Naive thymus-derived CD4-positive, alpha-beta T cell (primary cell): ENCODE measurements at regions of chr6 and their contacts with region 1.

Region 1: DNA sequence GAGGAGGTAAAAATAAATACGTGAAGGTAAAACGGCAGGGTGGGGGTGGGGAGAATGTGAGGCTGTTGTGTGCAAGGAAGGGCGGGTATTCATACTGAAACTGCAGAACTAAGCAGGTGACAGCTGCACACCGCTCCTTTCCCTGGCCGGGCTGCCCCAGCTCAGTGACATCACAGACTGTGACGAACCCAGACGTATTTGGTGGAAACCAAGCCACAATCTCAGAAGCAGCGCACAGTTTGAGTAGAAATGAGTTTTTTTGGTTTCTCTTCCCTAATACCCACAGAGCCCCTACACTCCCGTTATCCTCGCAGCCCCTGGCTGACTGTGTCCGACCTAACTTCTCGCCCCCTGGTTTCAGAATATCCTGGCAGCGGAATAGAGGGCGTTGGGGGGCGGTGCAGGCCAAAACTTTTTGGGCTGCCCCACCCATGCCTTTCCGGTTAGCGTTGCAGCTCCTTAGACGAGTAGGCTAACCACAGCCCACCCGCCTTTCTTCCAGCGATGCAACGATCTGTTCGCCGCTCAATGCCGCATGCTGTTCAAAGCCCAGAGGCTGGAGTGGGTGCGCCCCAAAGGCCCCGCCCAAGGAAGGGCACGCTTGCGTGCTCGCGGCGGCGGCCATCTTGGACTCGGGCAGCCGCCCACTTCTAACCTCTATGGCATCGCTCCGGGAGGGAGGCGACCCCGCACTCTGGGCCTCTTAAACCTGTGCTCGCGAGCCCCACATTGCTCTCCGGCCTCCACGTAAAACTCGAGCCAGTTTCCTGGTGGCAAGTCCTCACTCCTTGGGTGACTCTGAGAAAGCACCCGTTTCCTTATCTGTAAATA is 9.1 kb downstream of the BAK1 start:
- DNase-seq: peak; percentile 81 to 98 (median 95)
- ATAC-seq: peak; percentile 91
- H3K4me3 ChIP-seq: peak overlapping the region; percentile 85
- H3K4me3 Mint-ChIP-seq: peak overlapping the region; percentile 80 to 99 (median 94)
- H3K27ac ChIP-seq: peak overlapping the region; percentile 98
- H3K27ac Mint-ChIP-seq: peak overlapping the region; percentile 99 to 100 (median 100)
- H3K4me1 ChIP-seq: peaks cover 19 to 21% of the 10 kb centered on the region in 2 donors
- H3K4me1 Mint-ChIP-seq: peaks cover 8 to 57% (median 31%) of the 10 kb centered on the region in 7 donors
- H3K27me3 ChIP-seq: no peaks in the 10 kb centered on the region
- H3K27me3 Mint-ChIP-seq: peaks cover 0 to 3% (median 0%) of the 10 kb centered on the region in 5 donors

Region 2: GRCh38 chr6:32854376-32855178 is 716.4 kb before region 1 on chr6:
- CTCF ChIA-PET with region 1: no interaction called
- POLR2A ChIA-PET with region 1: no interaction called
- intact Hi-C with region 1: no loop called
- DNase-seq: peak in 5 of 9 donors; percentile 42 to 75 (median 52)
- ATAC-seq: peak; percentile 24
- H3K4me3 ChIP-seq: peak overlapping the region; percentile 91
- H3K4me3 Mint-ChIP-seq: peak overlapping the region; percentile 96 to 100 (median 100)
- H3K27ac ChIP-seq: peak overlapping the region; percentile 100
- H3K27ac Mint-ChIP-seq: peak overlapping the region; percentile 97 to 100 (median 100)
- H3K4me1 ChIP-seq: peaks cover 40 to 51% of the 10 kb centered on the region in 2 donors
- H3K4me1 Mint-ChIP-seq: peaks cover 57 to 82% (median 70%) of the 10 kb centered on the region in 7 donors
- H3K27me3 ChIP-seq: no peaks in the 10 kb centered on the region
- H3K27me3 Mint-ChIP-seq: no peaks in the 10 kb centered on the region

Region 3: DNA sequence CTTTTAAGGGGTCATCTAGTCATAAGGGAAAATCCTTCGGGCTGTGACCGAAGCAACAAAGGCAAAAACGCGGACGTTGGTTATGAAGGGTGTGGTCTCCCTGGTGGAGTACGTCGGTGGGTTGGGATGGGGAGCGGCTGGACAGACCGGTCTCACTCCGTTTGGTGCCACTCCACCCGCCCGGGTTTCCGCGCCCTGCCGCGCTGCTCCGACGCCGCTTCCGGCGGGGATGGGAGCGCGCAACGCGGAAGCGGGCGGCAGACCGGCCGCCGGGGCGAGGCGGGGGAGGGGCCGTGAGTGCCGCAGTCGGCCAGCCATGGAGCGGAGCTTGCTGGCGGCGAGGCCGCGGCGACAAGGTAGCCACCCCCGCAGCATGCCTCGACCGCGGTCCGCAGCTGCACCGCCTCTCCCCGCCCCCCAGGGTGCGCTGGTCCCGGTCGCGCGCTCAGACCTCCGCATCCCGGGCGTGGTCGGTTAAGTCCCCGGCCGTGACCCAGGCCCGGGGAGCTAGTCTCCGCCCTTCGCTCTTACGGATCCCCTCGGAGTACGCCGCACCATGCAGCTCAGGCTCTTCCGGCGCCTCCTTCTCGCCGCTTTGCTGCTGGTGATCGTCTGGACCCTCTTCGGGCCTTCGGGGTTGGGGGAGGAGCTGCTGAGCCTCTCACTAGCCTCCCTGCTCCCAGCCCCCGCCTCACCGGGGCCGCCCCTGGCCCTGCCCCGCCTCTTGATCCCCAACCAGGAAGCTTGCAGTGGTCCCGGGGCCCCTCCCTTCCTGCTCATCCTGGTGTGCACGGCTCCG is 294.0 kb before region 1 on chr6 and contains the start of gene B3GALT4:
- CTCF ChIA-PET with region 1: no interaction called
- POLR2A ChIA-PET with region 1: no interaction called
- intact Hi-C with region 1: loop called (anchors 2 to 5 kb)
- DNase-seq: peak; percentile 55 to 88 (median 63)
- ATAC-seq: peak; percentile 81
- H3K4me3 ChIP-seq: peak within 1 kb of the TSS; percentile 67
- H3K4me3 Mint-ChIP-seq: peak within 1 kb of the TSS; percentile 84 to 99 (median 92)
- H3K27ac ChIP-seq: peak within 1 kb of the TSS; percentile 87
- H3K27ac Mint-ChIP-seq: peak within 1 kb of the TSS; percentile 88 to 98 (median 93)
- H3K4me1 ChIP-seq: peaks cover 47 to 50% of the 10 kb centered on the region in 2 donors
- H3K4me1 Mint-ChIP-seq: peaks cover 38 to 83% (median 65%) of the 10 kb centered on the region in 7 donors
- H3K27me3 ChIP-seq: no peaks in the 10 kb centered on the region
- H3K27me3 Mint-ChIP-seq: no peaks in the 10 kb centered on the region
- total RNA-seq, gene B3GALT4: 12.9 to 48.0 (median 18.2) TPM

Region 4: DNA sequence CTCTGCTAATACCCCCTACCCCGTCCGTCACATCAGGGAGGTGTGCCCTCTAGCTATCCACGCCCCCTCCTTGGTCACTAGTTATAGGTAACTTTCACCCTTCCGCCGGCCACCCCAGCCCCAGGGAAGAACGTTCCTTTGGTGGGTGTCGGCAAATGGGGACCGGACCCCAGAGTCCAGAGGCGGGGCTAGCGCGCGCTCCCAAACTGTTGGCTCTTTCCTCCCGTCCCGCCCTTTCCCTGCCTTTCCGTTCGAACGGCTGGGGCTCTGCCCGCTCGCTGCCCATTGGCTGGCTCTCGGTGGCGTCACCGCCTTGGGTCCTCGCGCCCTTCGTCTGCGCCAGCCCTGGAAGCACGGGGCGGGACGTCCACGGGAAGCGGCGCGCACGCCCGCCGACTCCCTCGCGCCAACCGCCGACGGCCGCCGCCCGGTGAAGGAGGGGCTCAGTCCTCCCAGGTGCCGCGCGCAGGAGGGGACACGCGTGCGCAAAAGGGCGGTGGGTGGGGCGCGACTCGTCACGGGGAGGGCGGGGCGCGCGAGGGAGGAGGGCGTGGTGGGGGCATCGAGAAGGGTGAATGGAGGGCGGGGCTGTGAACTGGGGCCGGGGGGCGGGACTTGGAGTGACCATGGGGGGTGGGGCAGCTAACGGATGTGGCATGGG is 160.8 kb before region 1 on chr6:
- CTCF ChIA-PET with region 1: no interaction called
- POLR2A ChIA-PET with region 1: interaction called, 4 read pairs
- intact Hi-C with region 1: loop called (anchors 1 kb)
- DNase-seq: peak; percentile 94 to 98 (median 95)
- ATAC-seq: peak; percentile 82
- H3K4me3 ChIP-seq: peak overlapping the region; percentile 78
- H3K4me3 Mint-ChIP-seq: peak overlapping the region; percentile 85 to 95 (median 90)
- H3K27ac ChIP-seq: peak overlapping the region; percentile 100
- H3K27ac Mint-ChIP-seq: peak overlapping the region; percentile 65 to 99 (median 97)
- H3K4me1 ChIP-seq: peaks cover 35 to 36% of the 10 kb centered on the region in 2 donors
- H3K4me1 Mint-ChIP-seq: peaks cover 25 to 60% (median 46%) of the 10 kb centered on the region in 7 donors
- H3K27me3 ChIP-seq: no peaks in the 10 kb centered on the region
- H3K27me3 Mint-ChIP-seq: no peaks in the 10 kb centered on the region

Region 5: DNA sequence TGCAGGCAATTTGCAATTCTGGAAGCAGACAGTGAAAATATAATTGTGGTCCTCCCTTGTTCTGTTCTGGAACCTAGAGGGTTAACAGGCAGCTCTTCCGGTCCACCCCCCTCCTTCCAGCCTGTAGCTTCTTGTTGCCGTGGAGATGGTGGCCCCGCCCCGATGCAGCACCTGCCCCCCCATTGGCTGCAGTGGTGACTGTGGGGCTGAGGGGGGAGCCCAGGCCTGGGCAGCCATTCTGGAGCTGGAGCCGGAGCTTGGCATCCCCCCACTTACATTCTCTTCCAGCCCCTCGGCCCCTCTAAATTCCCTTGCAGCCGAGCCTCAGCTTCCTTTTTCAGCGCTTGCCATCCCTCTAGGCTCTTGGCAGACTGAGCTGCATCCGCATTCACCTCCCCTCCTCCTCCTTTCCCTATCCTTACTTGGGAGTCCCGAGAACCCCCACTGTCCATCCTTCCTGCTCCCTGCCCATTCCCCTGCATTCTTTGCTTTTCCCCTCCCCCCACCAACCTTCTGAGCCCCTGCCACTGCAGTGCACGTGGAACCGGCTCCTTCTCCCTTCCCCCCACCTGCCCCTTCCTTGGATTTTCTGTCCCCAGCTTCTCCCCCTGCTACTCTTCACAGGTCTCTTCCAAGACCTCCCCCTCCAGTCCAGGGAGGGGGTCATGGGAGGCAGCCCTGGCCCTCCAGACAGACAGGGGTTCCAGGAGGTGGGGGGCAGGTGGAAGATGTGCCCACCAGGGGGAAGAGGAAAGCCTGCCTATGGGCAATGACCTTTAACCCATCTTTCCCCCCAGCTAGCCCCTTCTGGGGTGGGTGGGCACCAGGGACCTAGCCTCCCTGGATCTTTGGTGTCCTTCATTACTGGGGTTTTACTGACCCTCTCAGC is 139.8 kb before region 1 on chr6:
- CTCF ChIA-PET with region 1: no interaction called
- POLR2A ChIA-PET with region 1: interaction called, 13 read pairs
- intact Hi-C with region 1: loop called (anchors 1 kb)
- DNase-seq: peak; percentile 65 to 89 (median 87)
- ATAC-seq: peak; percentile 82
- H3K4me3 ChIP-seq: peak overlapping the region; percentile 52
- H3K4me3 Mint-ChIP-seq: peak overlapping the region; percentile 86 to 98 (median 92)
- H3K27ac ChIP-seq: peak overlapping the region; percentile 88
- H3K27ac Mint-ChIP-seq: peak overlapping the region; percentile 81 to 98 (median 96)
- H3K4me1 ChIP-seq: peaks cover 42 to 51% of the 10 kb centered on the region in 2 donors
- H3K4me1 Mint-ChIP-seq: peaks cover 56 to 69% (median 64%) of the 10 kb centered on the region in 7 donors
- H3K27me3 ChIP-seq: no peaks in the 10 kb centered on the region
- H3K27me3 Mint-ChIP-seq: no peaks in the 10 kb centered on the region

Region 6: DNA sequence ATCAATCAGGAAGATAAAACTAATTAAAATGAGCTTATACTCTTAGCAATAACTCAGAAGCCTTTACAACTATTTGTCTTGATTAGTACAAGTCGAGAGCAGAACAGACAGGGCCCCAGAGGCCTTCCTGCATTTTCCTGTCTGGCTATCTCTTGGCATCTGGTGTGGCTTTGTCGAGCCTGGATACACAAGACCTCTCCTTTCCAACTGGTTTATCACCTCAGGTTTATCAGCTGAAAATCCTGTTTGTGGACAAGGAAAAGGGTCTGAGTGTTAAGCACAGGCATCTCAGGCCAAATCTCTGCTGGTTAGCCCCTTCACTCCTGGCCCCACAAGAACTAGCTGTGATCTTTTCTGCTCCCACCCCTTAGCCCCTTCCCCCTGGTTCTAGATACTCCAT is 23.5 kb before region 1 on chr6:
- CTCF ChIA-PET with region 1: no interaction called
- POLR2A ChIA-PET with region 1: interaction called, 12 read pairs
- intact Hi-C with region 1: loop called in 1 of 2 experiments (anchors 1 kb)
- DNase-seq: no peak
- ATAC-seq: no peak
- H3K4me3 ChIP-seq: no peak overlapping the region
- H3K4me3 Mint-ChIP-seq: peak overlapping the region in 6 of 10 donors; percentile 6 to 76 (median 46)
- H3K27ac ChIP-seq: no peak overlapping the region
- H3K27ac Mint-ChIP-seq: peak overlapping the region in 8 of 9 donors; percentile 61 to 89 (median 79)
- H3K4me1 ChIP-seq: peaks cover 10 to 14% of the 10 kb centered on the region in 2 donors
- H3K4me1 Mint-ChIP-seq: peaks cover 12 to 26% (median 22%) of the 10 kb centered on the region in 7 donors
- H3K27me3 ChIP-seq: no peaks in the 10 kb centered on the region
- H3K27me3 Mint-ChIP-seq: no peaks in the 10 kb centered on the region

Region 7: DNA sequence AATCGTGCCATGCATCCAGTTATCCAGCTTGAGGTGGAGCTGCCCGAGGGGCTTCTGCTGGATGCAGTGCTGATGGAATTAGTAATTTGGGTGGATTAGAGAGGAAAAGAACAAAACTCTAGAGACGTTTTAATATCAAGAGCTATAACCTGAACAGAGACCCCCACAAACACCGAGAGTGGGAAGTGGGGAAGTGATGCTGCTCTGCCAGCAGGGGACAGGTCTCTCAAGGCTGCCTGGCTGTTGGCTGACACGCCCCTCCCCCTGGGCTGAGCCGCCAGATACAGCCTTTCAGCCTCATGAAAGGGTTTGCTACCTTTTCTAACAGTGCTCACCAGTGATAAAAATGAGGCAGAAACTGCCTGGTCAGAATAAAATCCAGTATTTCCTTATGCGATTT is 208.3 kb after region 1 on chr6:
- CTCF ChIA-PET with region 1: no interaction called
- POLR2A ChIA-PET with region 1: no interaction called
- intact Hi-C with region 1: no loop called
- DNase-seq: no peak
- ATAC-seq: no peak
- H3K4me3 ChIP-seq: no peak overlapping the region
- H3K4me3 Mint-ChIP-seq: no peak overlapping the region
- H3K27ac ChIP-seq: no peak overlapping the region
- H3K27ac Mint-ChIP-seq: no peak overlapping the region
- H3K4me1 ChIP-seq: peaks cover 0 to 5% of the 10 kb centered on the region in 2 donors
- H3K4me1 Mint-ChIP-seq: peaks cover 8 to 45% (median 33%) of the 10 kb centered on the region in 7 donors
- H3K27me3 ChIP-seq: no peaks in the 10 kb centered on the region
- H3K27me3 Mint-ChIP-seq: no peaks in the 10 kb centered on the region

Region 8: GRCh38 chr6:34757687-34758274 is 1186.8 kb after region 1 on chr6:
- CTCF ChIA-PET with region 1: no interaction called
- POLR2A ChIA-PET with region 1: no interaction called
- intact Hi-C with region 1: loop called in 1 of 2 experiments (anchors 2 kb)
- DNase-seq: no peak
- ATAC-seq: no peak
- H3K4me3 ChIP-seq: peak overlapping the region; percentile 94
- H3K4me3 Mint-ChIP-seq: no peak overlapping the region
- H3K27ac ChIP-seq: peak overlapping the region; percentile 94
- H3K27ac Mint-ChIP-seq: no peak overlapping the region
- H3K4me1 ChIP-seq: peaks cover 7 to 12% of the 10 kb centered on the region in 2 donors
- H3K4me1 Mint-ChIP-seq: peaks cover 3 to 27% (median 14%) of the 10 kb centered on the region in 7 donors
- H3K27me3 ChIP-seq: no peaks in the 10 kb centered on the region
- H3K27me3 Mint-ChIP-seq: no peaks in the 10 kb centered on the region